ENCODE measurements at regions of chr12 and their contacts with region 1.

Region 1: GRCh38 chr12:108803428-108804105 is 53.8 kb downstream of the SSH1 start:
- DNase-seq: peak in 7 of 10 donors; percentile 70 to 89 (median 75)
- H3K4me3 ChIP-seq: peak overlapping the region in 3 of 59 donors; percentile 6 to 21 (median 10)
- H3K27ac ChIP-seq: peak overlapping the region in 58 of 59 donors; percentile 2 to 87 (median 73)
- H3K27me3 ChIP-seq: no peaks in the 10 kb centered on the region
- CTCF ChIP-seq: peak; percentile 93 to 100 (median 98)

Region 2: DNA sequence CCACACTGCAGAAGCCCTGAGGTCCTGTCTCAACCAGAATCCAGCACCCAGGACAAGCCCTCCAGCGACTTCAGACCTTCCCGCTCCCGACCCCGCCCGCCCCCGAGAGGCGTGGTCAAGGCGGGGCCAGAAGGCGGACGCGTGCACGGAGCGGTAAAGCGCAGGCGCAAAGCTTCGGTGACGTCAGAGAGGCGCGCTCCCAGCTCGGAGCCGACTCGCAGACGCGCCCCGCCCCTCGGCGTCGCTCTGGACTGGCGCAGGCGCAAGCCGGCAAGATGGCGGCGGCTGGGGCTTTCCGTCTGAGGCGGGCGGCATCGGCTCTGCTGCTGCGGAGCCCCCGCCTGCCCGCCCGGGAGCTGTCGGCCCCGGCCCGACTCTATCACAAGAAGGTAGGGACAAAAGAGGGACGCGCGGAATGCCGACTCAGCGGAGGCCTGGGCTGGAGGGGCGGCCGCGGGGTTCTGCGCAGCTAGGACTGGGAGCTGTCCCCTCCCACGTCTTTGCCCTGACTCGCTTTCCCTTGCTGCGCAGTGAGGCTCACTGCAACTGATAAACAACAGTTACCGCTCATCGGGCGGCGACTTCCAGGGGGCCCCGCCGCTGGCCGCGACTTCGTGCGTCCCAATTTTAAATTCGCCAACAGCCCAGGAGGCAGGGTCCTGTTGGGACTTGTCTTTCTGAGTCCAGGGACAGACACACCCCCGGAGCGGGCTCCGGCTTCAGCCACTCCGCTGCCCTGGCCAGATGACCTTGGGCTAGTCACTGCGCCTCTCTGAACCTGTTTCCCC is 241.0 kb before region 1 on chr12 and contains the start of gene ISCU:
- intact Hi-C with region 1: loop called (anchors 2 to 5 kb)
- DNase-seq: peak; percentile 91 to 99 (median 96)
- H3K4me3 ChIP-seq: peak within 1 kb of the TSS; percentile 69 to 100 (median 97)
- H3K27ac ChIP-seq: peak within 1 kb of the TSS; percentile 63 to 99 (median 96)
- H3K27me3 ChIP-seq: no peaks in the 10 kb centered on the region
- CTCF ChIP-seq: peak in 30 of 56 donors; percentile 9 to 60 (median 30)
- total RNA-seq, gene ISCU: 120 to 322 (median 236) TPM

Region 3: DNA sequence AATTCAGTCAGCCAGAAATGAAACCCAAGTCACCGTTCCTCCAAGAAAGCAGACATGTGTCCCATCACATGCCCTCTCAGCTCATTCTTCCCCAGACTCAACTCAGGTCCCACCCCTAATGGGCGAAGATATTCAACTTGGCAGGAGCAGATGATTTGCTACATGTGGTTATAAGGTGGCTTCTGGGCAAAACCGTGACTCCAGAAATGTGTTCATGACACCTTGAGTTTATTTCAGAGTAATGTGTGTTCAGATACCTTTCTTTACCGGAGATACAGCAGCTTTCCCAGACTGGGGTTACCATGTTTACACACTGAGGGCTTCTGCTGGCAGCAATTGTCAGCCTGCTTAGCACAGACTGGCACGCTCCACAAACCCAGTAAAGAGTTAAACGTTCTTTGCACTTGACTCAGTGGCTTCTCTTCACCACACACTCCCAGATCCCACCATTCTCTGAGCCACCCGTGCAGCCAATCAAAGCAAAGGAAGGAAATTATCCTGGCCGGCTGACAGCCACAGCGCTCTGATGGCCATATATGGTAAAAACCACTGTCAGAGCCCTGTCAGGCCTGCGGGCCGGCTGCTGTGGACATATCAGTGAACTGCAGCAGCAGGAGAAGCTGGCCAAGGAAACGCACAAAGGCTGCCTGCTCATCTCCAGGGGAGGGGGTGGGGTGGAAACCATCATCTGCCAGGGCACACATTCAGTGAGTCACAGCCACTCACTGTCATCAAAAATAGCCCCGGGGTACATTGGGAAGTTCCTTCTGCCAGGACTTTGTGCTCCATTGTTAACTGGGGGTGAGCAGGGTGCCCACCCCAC is 112.2 kb before region 1 on chr12:
- intact Hi-C with region 1: loop called (anchors 2 to 10 kb)
- DNase-seq: peak; percentile 76 to 99 (median 96)
- H3K4me3 ChIP-seq: peak overlapping the region in 58 of 59 donors; percentile 3 to 64 (median 41)
- H3K27ac ChIP-seq: peak overlapping the region; percentile 84 to 99 (median 95)
- H3K27me3 ChIP-seq: no peaks in the 10 kb centered on the region
- CTCF ChIP-seq: peak in 40 of 56 donors; percentile 9 to 59 (median 41)

Region 4: DNA sequence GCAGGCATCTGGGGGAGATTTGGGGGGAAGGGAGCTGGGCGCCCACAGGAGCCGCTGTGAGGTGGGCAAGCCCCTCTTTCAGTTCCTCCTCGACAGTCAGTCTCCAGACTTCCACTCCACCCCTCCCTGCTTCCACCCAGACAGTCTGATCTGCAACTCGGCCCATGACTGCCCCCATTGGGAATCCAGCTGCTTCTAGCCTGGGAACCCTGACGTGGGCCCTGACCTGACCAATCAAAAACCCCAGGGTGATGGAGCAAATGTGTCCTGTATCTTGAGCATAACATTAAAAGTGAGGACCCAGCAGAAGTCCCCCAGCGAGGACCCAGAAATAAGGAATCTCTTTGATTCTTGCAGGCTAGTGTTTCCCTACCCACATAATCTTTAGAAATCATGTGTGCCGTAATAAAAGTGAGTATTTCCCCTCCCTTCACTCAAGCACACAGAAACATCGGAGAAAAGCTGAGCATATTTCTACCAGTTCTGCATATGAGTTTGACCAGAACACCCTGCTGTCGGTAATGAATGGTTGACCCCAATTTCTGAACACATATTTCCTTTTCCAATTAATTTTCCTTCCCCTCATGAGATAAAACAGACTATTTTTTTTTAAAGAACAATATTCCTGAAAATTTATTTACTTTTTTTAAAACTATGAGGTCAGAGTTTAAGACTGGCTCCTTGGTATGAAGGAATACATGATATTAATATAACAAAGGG is 47.4 kb after region 1 on chr12:
- intact Hi-C with region 1: loop called (anchors 5 to 10 kb)
- DNase-seq: peak in 1 of 10 donors; percentile 49
- H3K4me3 ChIP-seq: peak overlapping the region in 5 of 59 donors; percentile 23 to 47 (median 38)
- H3K27ac ChIP-seq: peak overlapping the region in 43 of 59 donors; percentile 1 to 95 (median 51)
- H3K27me3 ChIP-seq: no peaks in the 10 kb centered on the region
- CTCF ChIP-seq: peak in 1 of 56 donors; percentile 10

Region 5: GRCh38 chr12:108950991-108951739 is 147.6 kb after region 1 on chr12:
- intact Hi-C with region 1: loop called in 1 of 2 experiments (anchors 10 kb)
- DNase-seq: peak; percentile 51 to 81 (median 70)
- H3K4me3 ChIP-seq: peak overlapping the region in 41 of 59 donors; percentile 1 to 52 (median 31)
- H3K27ac ChIP-seq: peak overlapping the region in 13 of 59 donors; percentile 1 to 52 (median 15)
- H3K27me3 ChIP-seq: no peaks in the 10 kb centered on the region
- CTCF ChIP-seq: peak; percentile 81 to 96 (median 91)

Region 6: GRCh38 chr12:109126784-109127183 is 323.2 kb after region 1 on chr12:
- intact Hi-C with region 1: no loop called
- DNase-seq: no peak
- H3K4me3 ChIP-seq: no peak overlapping the region
- H3K27ac ChIP-seq: no peak overlapping the region
- H3K27me3 ChIP-seq: no peaks in the 10 kb centered on the region
- CTCF ChIP-seq: no peak